ENCODE measurements at regions of chr14 and their contacts with region 1.

Region 1: GRCh38 chr14:44170101-44170500 is 337.0 kb downstream of the FSCB start:
- DNase-seq: no peak
- H3K4me3 ChIP-seq: no peak overlapping the region
- H3K27ac ChIP-seq: no peak overlapping the region
- H3K4me1 ChIP-seq: no peaks in the 10 kb centered on the region
- H3K27me3 ChIP-seq: no peaks in the 10 kb centered on the region
- CTCF ChIP-seq: no peak
- EP300 ChIP-seq: no peak
- POLR2A ChIP-seq: no peak

Region 2: GRCh38 chr14:43697003-43697402 is 473.1 kb before region 1 on chr14:
- intact Hi-C with region 1: no loop called
- DNase-seq: no peak
- H3K4me3 ChIP-seq: no peak overlapping the region
- H3K27ac ChIP-seq: no peak overlapping the region
- H3K4me1 ChIP-seq: no peaks in the 10 kb centered on the region
- H3K27me3 ChIP-seq: no peaks in the 10 kb centered on the region
- CTCF ChIP-seq: no peak
- EP300 ChIP-seq: no peak
- POLR2A ChIP-seq: no peak

Region 3: DNA sequence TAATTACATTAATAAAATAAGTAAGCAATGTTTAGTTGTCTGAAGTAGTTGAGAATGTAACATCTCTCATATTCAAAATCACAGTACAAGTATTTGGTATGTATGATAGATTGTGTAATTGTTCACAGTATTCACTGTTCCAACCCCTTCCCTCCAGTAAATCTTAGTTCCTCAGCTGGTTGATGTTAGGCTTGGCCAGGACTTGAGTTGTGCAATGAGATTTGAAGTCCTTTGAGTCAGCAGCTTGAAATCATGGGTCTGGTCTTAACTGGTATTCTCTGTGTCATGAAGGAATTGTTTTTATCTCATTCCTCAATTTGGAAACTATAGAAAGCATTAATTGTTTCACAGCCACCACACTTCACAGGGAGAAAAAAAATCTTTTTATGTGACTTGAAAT is 140.2 kb before region 1 on chr14:
- intact Hi-C with region 1: loop called in 1 of 4 experiments (anchors 10 kb)
- DNase-seq: no peak
- H3K4me3 ChIP-seq: no peak overlapping the region
- H3K27ac ChIP-seq: no peak overlapping the region
- H3K4me1 ChIP-seq: no peaks in the 10 kb centered on the region
- H3K27me3 ChIP-seq: no peaks in the 10 kb centered on the region
- CTCF ChIP-seq: no peak
- EP300 ChIP-seq: no peak
- POLR2A ChIP-seq: no peak

Measured in ovary (tissue), 10 donors.